Activated naive CD4-positive, alpha-beta T cell treated with anti-CD3 and anti-CD28 coated beads for 36 hours (primary cell): ENCODE measurements at regions of chr19 and their contacts with region 1.

Region 1: GRCh38 chr19:12938234-12939025 is at the start of gene CALR:
- DNase-seq: peak; percentile 100
- H3K4me3 Mint-ChIP-seq: peak within 1 kb of the TSS; percentile 92
- H3K27ac Mint-ChIP-seq: peak within 1 kb of the TSS; percentile 94
- H3K4me1 Mint-ChIP-seq: peaks cover 51% of the 10 kb centered on the region
- H3K27me3 Mint-ChIP-seq: no peaks in the 10 kb centered on the region
- total RNA-seq, gene CALR: 407 to 431 TPM

Region 2: DNA sequence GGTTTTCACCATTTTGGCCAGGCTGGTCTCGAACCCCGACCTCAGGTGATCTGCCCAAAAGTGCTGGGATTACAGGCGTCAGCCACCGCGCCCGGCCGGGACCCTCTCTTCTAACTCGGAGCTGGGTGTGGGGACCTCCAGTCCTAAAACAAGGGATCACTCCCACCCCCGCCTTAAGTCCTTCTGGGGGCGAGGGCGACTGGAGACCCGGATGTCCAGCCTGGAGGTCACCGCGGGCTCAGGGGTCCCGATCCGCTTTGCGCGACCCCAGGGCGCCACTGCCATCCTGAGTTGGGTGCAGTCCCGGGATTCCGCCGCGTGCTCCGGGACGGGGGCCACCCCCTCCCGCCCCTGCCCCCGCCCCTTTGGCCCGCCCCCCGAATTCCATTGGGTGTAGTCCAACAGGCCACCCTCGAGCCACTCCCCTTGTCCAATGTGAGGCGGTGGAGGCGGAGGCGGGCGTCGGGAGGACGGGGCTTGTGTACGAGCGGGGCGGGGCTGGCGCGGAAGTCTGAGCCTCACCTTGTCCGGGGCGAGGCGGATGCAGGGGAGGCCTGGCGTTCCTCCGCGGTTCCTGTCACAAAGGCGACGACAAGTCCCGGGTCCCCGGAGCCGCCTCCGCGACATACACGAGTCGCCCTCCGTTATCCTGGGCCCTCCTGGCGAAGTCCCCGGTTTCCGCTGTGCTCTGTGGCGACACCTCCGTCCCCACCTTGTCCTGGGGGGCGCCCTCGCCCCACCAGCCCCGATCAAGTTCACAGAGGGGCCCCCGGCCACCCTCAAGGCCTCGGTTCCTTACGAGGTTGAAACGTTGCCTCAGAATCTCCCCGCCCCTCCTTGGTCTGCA is 1848.2 kb before region 1 on chr19:
- CTCF ChIA-PET with region 1: no interaction called
- intact Hi-C with region 1: loop called (anchors 10 kb)
- DNase-seq: peak; percentile 99
- H3K4me3 Mint-ChIP-seq: peak overlapping the region; percentile 94
- H3K27ac Mint-ChIP-seq: peak overlapping the region; percentile 99
- H3K4me1 Mint-ChIP-seq: peaks cover 48% of the 10 kb centered on the region
- H3K27me3 Mint-ChIP-seq: no peaks in the 10 kb centered on the region

Region 3: DNA sequence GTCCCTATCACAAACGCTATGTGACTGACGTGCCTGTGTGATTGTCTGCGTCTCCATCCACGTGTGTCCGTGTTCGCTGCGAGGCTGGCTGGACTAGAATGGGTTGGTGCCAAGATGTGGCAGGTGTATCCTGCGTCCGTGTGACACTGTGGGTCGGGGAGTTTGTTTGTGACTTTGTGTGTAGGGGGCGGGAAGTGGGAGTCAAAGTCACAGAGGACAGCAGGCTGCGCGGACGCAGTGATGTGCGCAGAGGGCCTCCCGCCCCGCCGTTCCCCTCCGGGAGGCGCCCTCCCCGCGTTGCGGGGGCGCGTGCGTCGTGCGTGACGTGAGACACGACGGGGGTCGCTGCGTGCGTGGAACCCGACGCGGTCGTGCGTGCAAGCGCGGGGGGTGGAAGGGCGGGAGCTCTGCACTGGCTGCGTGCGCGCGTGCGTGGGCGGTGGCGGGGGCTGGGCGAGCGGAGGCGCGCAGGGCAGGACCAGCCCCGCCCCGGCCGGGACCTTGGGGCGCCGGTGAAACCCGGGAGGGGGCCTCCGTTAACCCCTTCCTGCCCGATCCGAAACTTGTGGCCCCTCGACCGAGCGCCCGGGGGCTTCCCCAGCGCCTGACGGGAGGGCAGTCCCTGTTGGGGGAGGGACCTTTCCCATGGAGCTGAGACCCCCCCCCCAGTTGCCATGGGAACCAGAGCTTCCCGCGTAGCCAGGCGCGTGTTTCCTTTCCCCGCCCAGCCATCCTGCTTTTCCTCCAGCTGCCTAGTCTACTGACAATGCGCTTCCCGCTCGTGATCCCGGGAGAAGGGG is 156.0 kb before region 1 on chr19:
- CTCF ChIA-PET with region 1: no interaction called
- intact Hi-C with region 1: loop called (anchors 2 kb)
- DNase-seq: peak; percentile 93
- H3K4me3 Mint-ChIP-seq: peak overlapping the region; percentile 74
- H3K27ac Mint-ChIP-seq: peak overlapping the region; percentile 93
- H3K4me1 Mint-ChIP-seq: peaks cover 33% of the 10 kb centered on the region
- H3K27me3 Mint-ChIP-seq: no peaks in the 10 kb centered on the region

Region 4: DNA sequence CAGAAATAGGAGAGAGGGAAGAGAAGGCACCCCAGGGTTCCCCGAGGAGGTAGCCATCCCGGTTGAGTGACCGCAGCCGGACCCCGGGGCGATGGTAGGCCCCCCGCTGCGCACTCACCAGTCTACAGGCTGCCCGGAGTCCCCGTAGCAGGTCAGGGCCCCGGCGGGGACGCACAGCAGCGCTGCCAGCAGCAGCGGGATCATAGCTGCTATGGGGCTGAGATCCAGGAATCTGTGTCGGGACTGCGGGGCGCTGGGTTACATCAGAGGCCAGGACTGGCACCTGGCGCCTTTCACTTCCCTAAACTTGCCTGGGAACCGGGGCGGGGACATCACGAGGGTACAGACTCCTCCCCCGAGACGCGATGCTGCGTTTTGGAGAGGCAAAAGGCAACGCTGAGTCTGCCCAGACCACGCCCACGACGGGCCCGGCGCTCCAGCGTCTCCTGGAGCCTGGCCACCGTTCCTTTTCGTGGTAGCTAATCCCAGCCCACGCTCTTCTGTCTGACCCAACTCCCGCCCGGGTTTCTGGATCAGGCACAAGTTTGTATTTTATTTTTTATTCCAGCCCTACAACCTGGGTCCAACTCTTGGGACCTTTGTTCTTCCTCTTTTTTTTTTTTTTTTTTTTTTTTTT is 57.1 kb before region 1 on chr19 and contains the start of gene DNASE2:
- CTCF ChIA-PET with region 1: interaction called, 4 read pairs
- intact Hi-C with region 1: loop called (anchors 1 kb)
- DNase-seq: peak; percentile 97
- H3K4me3 Mint-ChIP-seq: peak within 1 kb of the TSS; percentile 88
- H3K27ac Mint-ChIP-seq: peak within 1 kb of the TSS; percentile 76
- H3K4me1 Mint-ChIP-seq: peaks cover 28% of the 10 kb centered on the region
- H3K27me3 Mint-ChIP-seq: no peaks in the 10 kb centered on the region
- total RNA-seq, gene DNASE2: 30.9 to 31.6 TPM

Region 5: GRCh38 chr19:12913851-12914690 is 24.4 kb before region 1 on chr19:
- CTCF ChIA-PET with region 1: no interaction called
- intact Hi-C with region 1: loop called (anchors 1 kb)
- DNase-seq: peak; percentile 79
- H3K4me3 Mint-ChIP-seq: peak overlapping the region; percentile 45
- H3K27ac Mint-ChIP-seq: peak overlapping the region; percentile 88
- H3K4me1 Mint-ChIP-seq: peaks cover 31% of the 10 kb centered on the region
- H3K27me3 Mint-ChIP-seq: no peaks in the 10 kb centered on the region

Region 6: DNA sequence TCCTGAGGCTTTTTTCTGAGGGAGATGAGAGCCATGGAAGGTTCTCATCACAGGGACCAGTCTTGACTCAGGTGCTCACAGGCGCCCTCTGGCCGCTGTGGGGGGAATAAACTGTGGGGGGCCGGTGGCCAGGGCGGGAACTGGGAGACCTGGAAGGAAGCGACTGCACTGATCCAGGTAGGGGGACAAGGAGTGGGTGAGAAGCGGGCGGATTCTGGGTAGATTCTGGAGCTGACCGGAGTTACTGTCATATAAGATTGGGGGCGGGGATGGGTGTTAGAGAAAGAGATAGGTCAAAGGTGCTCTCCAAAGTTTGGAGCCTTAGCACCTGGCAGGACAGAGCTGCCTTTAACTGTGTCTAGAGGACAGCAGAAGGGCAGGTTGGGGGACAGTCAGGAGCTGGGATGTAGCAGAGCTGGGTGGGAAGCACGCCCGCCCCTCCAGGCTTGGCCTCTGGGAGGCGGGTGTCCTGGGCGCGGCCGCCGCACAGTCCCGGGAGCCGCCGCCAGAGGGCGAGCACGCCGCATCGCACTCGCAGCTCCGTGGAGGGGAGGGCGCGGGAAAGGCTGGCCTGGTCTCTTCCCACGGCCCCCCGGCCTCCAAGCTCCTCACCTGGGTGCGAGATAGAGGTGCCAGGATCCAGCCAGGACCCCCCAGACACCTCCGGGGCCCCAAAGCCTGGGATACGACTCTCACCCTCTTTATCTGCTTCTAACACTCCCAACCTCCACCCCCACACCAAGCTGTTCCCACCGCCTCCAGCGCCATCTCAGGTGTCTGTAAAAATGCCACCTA is 26.8 kb after region 1 on chr19:
- CTCF ChIA-PET with region 1: interaction called, 19 read pairs
- intact Hi-C with region 1: loop called (anchors 1 kb)
- DNase-seq: peak; percentile 92
- H3K4me3 Mint-ChIP-seq: peak overlapping the region; percentile 93
- H3K27ac Mint-ChIP-seq: peak overlapping the region; percentile 88
- H3K4me1 Mint-ChIP-seq: peaks cover 11% of the 10 kb centered on the region
- H3K27me3 Mint-ChIP-seq: no peaks in the 10 kb centered on the region

Region 7: GRCh38 chr19:13150187-13150930 is 211.9 kb after region 1 on chr19 and contains the starts of genes IER2 and STX10:
- CTCF ChIA-PET with region 1: no interaction called
- intact Hi-C with region 1: loop called (anchors 1 kb)
- DNase-seq: peak; percentile 96
- H3K4me3 Mint-ChIP-seq: peak within 1 kb of the TSS; percentile 99
- H3K27ac Mint-ChIP-seq: peak within 1 kb of the TSS; percentile 98
- H3K4me1 Mint-ChIP-seq: peaks cover 19% of the 10 kb centered on the region
- H3K27me3 Mint-ChIP-seq: no peaks in the 10 kb centered on the region
- total RNA-seq, gene IER2: 120 to 123 TPM
- total RNA-seq, gene STX10: 48.3 to 48.9 TPM